ENCODE measurements at regions of chr11 and their contacts with region 1.

Region 1: GRCh38 chr11:41201156-41201555 is 258.3 kb downstream of the LRRC4C start:
- DNase-seq: peak; percentile 47 to 65
- H3K4me3 ChIP-seq: no peak overlapping the region
- H3K4me3 Mint-ChIP-seq: no peak overlapping the region
- H3K27ac Mint-ChIP-seq: no peak overlapping the region
- H3K4me1 ChIP-seq: no peaks in the 10 kb centered on the region
- H3K4me1 Mint-ChIP-seq: no peaks in the 10 kb centered on the region
- H3K27me3 ChIP-seq: no peaks in the 10 kb centered on the region
- H3K27me3 Mint-ChIP-seq: peaks cover 3% of the 10 kb centered on the region
- CTCF ChIP-seq: peak; percentile 73 to 75

Region 2: DNA sequence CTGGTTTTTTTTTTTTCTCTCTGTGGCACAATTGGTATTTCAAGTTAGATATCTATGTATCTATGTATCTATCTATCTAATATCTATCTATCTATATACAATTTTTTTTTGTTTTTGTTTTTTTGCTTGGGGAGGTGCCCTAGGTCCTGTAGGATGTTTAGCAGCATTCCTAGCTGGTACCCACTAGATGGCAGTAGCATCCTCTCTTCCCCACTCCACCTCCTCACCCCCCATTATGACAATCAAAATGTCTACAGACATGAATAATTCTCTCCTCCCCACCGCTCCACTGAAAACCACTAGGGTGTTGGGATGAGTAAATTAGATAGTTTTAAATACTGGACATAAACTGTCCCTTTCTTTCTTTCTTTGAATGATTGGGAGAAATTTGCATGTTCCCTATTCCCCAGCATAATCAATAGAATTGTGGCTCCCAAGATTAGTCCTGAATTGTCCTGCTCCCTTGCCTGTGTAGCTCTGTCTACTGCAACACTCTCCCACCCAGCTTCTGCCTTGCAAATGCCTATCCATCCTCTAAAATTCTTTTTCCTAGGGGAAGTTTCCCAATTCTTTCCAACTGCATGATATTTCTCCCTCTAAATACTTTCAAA is 894.1 kb before region 1 on chr11:
- CTCF ChIA-PET with region 1: interaction called, 7 read pairs
- POLR2A ChIA-PET with region 1: no interaction called
- intact Hi-C with region 1: loop called (anchors 1 kb)
- DNase-seq: peak in 1 of 2 experiments; percentile 24
- H3K4me3 ChIP-seq: no peak overlapping the region
- H3K4me3 Mint-ChIP-seq: no peak overlapping the region
- H3K27ac Mint-ChIP-seq: no peak overlapping the region
- H3K4me1 ChIP-seq: no peaks in the 10 kb centered on the region
- H3K4me1 Mint-ChIP-seq: no peaks in the 10 kb centered on the region
- H3K27me3 ChIP-seq: no peaks in the 10 kb centered on the region
- H3K27me3 Mint-ChIP-seq: peaks cover 4% of the 10 kb centered on the region
- CTCF ChIP-seq: peak; percentile 55 to 75

Region 3: GRCh38 chr11:40722179-40722795 is 478.9 kb before region 1 on chr11:
- CTCF ChIA-PET with region 1: no interaction called
- POLR2A ChIA-PET with region 1: no interaction called
- intact Hi-C with region 1: loop called (anchors 2 kb)
- DNase-seq: peak; percentile 49 to 56
- H3K4me3 ChIP-seq: no peak overlapping the region
- H3K4me3 Mint-ChIP-seq: no peak overlapping the region
- H3K27ac Mint-ChIP-seq: no peak overlapping the region
- H3K4me1 ChIP-seq: no peaks in the 10 kb centered on the region
- H3K4me1 Mint-ChIP-seq: no peaks in the 10 kb centered on the region
- H3K27me3 ChIP-seq: no peaks in the 10 kb centered on the region
- H3K27me3 Mint-ChIP-seq: peaks cover 2% of the 10 kb centered on the region
- CTCF ChIP-seq: peak; percentile 73 to 86

Region 4: GRCh38 chr11:40819230-40819629 is 381.9 kb before region 1 on chr11:
- CTCF ChIA-PET with region 1: no interaction called
- POLR2A ChIA-PET with region 1: no interaction called
- intact Hi-C with region 1: loop called (anchors 1 kb)
- DNase-seq: no peak
- H3K4me3 ChIP-seq: no peak overlapping the region
- H3K4me3 Mint-ChIP-seq: no peak overlapping the region
- H3K27ac Mint-ChIP-seq: no peak overlapping the region
- H3K4me1 ChIP-seq: no peaks in the 10 kb centered on the region
- H3K4me1 Mint-ChIP-seq: no peaks in the 10 kb centered on the region
- H3K27me3 ChIP-seq: no peaks in the 10 kb centered on the region
- H3K27me3 Mint-ChIP-seq: no peaks in the 10 kb centered on the region
- CTCF ChIP-seq: peak; percentile 13 to 15

Region 5: GRCh38 chr11:40877256-40877655 is 323.9 kb before region 1 on chr11:
- CTCF ChIA-PET with region 1: interaction called, 6 read pairs
- POLR2A ChIA-PET with region 1: no interaction called
- intact Hi-C with region 1: loop called (anchors 1 kb)
- DNase-seq: no peak
- H3K4me3 ChIP-seq: no peak overlapping the region
- H3K4me3 Mint-ChIP-seq: no peak overlapping the region
- H3K27ac Mint-ChIP-seq: no peak overlapping the region
- H3K4me1 ChIP-seq: no peaks in the 10 kb centered on the region
- H3K4me1 Mint-ChIP-seq: no peaks in the 10 kb centered on the region
- H3K27me3 ChIP-seq: no peaks in the 10 kb centered on the region
- H3K27me3 Mint-ChIP-seq: peaks cover 3% of the 10 kb centered on the region
- CTCF ChIP-seq: no peak

Region 6: GRCh38 chr11:40924915-40925314 is 276.2 kb before region 1 on chr11:
- CTCF ChIA-PET with region 1: no interaction called
- POLR2A ChIA-PET with region 1: no interaction called
- intact Hi-C with region 1: loop called (anchors 1 kb)
- DNase-seq: no peak
- H3K4me3 ChIP-seq: no peak overlapping the region
- H3K4me3 Mint-ChIP-seq: no peak overlapping the region
- H3K27ac Mint-ChIP-seq: no peak overlapping the region
- H3K4me1 ChIP-seq: no peaks in the 10 kb centered on the region
- H3K4me1 Mint-ChIP-seq: no peaks in the 10 kb centered on the region
- H3K27me3 ChIP-seq: no peaks in the 10 kb centered on the region
- H3K27me3 Mint-ChIP-seq: no peaks in the 10 kb centered on the region
- CTCF ChIP-seq: no peak

Region 7: DNA sequence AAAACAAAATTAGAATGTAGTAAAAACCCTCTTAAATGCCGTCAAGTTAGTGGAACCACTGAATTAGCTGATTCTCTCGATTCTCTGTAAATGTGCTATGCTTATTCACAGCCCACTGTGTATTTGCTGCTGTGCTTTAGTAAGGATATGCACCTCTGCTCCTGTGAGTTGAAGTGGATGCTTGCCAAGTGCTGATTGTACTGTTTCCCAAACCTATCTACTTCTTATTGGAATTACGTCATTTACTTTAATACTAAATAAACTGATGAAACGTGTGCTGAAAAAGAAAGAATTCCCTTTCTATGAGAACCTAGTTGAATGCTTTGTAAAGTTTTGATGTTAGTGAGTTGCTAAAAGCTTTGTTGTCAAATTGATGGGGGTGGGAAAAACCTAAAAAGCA is 99.9 kb after region 1 on chr11:
- CTCF ChIA-PET with region 1: no interaction called
- POLR2A ChIA-PET with region 1: no interaction called
- intact Hi-C with region 1: no loop called
- DNase-seq: no peak
- H3K4me3 ChIP-seq: no peak overlapping the region
- H3K4me3 Mint-ChIP-seq: no peak overlapping the region
- H3K27ac Mint-ChIP-seq: no peak overlapping the region
- H3K4me1 ChIP-seq: no peaks in the 10 kb centered on the region
- H3K4me1 Mint-ChIP-seq: no peaks in the 10 kb centered on the region
- H3K27me3 ChIP-seq: no peaks in the 10 kb centered on the region
- H3K27me3 Mint-ChIP-seq: peaks cover 3% of the 10 kb centered on the region
- CTCF ChIP-seq: no peak